ENCODE measurements at regions of chr1 and their contacts with region 1.

Region 1: GRCh38 chr1:25204797-25205480 is 27.4 kb downstream of the SYF2 start:
- DNase-seq: peak; percentile 40
- H3K4me3 ChIP-seq: no peak overlapping the region
- CTCF ChIP-seq: peak; percentile 66

Region 2: GRCh38 chr1:24673336-24673735 is 531.6 kb before region 1 on chr1:
- in situ Hi-C with region 1: loop called (anchors 25 kb)
- DNase-seq: no peak
- H3K4me3 ChIP-seq: no peak overlapping the region
- CTCF ChIP-seq: no peak

Region 3: DNA sequence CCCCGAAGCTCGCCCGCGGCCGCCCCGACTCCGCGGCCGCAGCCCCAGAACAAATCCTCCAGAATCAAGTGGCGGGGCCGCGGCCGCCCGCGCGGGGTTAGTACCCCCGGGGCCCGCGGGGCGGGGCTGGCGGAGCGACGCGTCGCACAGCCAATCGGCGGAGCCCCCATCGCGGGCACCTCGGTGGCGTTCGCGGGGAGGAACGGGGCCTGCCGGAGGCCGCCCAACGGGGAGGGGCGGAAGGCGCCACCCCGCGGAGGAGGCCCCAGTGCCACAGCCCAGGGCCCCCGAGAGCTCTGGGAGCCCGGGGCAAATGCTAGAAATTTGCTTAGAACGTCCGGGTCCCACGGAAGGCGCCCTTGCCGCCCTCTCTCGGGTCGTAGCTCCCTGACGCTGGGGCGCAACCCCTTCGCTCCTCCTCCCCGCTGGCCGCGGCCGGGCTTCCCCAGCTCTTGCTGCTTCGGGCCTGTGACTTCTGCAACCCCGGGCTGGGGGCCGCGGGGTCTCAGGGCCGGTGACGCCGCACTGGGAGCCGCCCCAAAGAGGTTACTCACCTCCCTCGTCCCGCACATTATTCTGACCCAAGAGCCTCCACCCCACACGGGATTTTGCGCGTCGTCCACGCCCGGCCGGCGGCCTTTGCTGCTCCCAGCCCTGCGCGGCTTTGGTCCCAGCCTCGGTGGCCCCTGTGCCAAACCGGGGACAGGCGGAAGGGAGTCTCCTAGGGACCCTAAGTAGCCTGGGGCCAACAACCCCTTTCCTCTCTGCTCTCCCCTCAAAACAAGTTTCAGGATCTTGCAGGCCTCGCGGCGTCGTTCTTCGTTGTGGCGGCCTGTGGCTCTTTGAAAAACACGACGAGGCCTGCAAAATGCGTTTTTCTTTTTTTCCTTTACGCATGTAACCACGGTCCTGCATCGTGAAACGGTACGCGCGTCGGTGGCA is 274.5 kb before region 1 on chr1 and contains the start of gene RUNX3:
- in situ Hi-C with region 1: loop called (anchors 25 kb)
- DNase-seq: no peak
- H3K4me3 ChIP-seq: no peak within 1 kb of the TSS
- CTCF ChIP-seq: no peak

Region 4: GRCh38 chr1:25688390-25689161 is 483.6 kb after region 1 on chr1:
- in situ Hi-C with region 1: no loop called
- DNase-seq: no peak
- H3K4me3 ChIP-seq: no peak overlapping the region
- CTCF ChIP-seq: no peak

Measured in astrocyte of the cerebellum (primary cell).